Activated CD8-positive, alpha-beta T cell treated with anti-CD3 and anti-CD28 coated beads, Interleukin-2, amount 10 ng/mL, durations not matched to agents 7 days and 5 days (primary cell): ENCODE measurements at regions of chr11 and their contacts with region 1.

Region 1: DNA sequence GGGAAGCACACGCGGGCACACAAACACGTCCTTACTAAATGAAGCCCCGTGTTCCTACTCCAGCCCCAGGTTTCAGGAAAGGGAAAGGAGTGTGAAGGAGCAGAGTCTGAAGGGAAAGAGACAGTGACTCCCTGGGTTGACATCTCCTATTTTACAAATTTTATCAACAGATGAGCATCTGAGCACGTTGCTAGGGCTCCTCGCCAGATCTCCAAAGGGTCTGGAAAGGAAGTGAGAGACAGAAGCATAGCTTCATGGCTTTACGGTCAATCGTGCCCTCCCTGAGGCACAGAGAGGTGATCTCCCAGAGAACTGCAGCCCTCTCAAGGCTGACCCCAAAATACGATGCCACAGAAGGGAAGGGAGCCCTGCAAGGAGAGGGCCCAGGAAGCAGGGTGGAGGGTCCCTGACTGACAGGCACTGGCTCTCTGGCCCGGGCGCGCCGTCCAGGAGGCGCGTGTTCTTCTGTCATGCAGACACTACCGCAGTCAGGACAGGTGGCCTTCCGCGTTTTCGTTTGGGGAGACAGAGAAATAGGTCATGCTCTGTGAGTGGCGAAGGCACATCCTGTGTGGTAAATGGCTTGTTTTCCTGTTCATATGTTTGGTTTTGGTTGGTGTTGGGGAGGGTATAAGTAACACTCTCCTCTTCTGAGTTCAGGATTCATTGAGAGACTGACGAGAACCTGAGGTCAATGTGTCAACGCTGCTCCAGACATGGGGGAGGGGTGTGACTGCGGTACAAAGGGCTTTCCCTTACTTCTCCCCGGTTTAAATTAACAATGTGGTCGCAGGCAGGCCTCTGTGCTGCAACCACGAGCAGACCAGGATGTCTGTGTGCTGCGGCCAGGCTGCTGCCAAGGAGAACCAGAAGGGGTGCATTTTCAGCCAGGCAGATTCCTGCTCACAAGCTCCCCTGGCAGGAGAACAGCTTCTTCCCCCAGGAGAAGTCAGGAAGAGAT is 813.3 kb downstream of the OPCML start:
- DNase-seq: peak; percentile 80
- ATAC-seq: peak; percentile 88
- H3K4me3 Mint-ChIP-seq: peak overlapping the region; percentile 60
- H3K27ac Mint-ChIP-seq: peak overlapping the region; percentile 53
- H3K4me1 Mint-ChIP-seq: peaks cover 31% of the 10 kb centered on the region
- H3K27me3 Mint-ChIP-seq: peaks cover 22% of the 10 kb centered on the region

Region 2: GRCh38 chr11:132941024-132941646 is 222.1 kb after region 1 on chr11:
- CTCF ChIA-PET with region 1: interaction called, 10 read pairs
- POLR2A ChIA-PET with region 1: no interaction called
- DNase-seq: peak; percentile 28
- ATAC-seq: no peak
- H3K4me3 Mint-ChIP-seq: no peak overlapping the region
- H3K27ac Mint-ChIP-seq: no peak overlapping the region
- H3K4me1 Mint-ChIP-seq: peaks cover 6% of the 10 kb centered on the region
- H3K27me3 Mint-ChIP-seq: peaks cover 29% of the 10 kb centered on the region